Right ventricle myocardium inferior (tissue), 1 donor: ENCODE measurements at regions of chr3 and their contacts with region 1.

Region 1: DNA sequence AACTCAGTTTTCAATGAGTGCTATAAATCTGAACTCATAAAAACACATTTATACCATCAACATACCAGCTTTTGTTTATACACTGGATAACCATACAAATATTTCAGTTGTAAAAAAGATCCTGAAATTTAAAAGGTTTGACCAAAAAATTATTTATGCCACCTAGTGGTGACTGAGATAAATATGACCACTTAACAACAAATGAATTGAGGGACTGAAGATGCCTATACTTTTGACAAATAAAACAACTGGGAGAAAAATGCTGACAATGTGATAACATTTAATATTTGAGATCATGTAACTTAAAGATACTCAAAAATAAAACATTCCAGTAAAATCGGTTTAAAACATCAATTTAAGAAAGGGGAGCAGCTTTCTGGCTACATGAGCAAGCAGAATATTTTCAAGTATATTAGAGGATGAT is 30.4 kb downstream of the ATG3 start:
- DNase-seq: no peak
- ATAC-seq: no peak

Region 2: DNA sequence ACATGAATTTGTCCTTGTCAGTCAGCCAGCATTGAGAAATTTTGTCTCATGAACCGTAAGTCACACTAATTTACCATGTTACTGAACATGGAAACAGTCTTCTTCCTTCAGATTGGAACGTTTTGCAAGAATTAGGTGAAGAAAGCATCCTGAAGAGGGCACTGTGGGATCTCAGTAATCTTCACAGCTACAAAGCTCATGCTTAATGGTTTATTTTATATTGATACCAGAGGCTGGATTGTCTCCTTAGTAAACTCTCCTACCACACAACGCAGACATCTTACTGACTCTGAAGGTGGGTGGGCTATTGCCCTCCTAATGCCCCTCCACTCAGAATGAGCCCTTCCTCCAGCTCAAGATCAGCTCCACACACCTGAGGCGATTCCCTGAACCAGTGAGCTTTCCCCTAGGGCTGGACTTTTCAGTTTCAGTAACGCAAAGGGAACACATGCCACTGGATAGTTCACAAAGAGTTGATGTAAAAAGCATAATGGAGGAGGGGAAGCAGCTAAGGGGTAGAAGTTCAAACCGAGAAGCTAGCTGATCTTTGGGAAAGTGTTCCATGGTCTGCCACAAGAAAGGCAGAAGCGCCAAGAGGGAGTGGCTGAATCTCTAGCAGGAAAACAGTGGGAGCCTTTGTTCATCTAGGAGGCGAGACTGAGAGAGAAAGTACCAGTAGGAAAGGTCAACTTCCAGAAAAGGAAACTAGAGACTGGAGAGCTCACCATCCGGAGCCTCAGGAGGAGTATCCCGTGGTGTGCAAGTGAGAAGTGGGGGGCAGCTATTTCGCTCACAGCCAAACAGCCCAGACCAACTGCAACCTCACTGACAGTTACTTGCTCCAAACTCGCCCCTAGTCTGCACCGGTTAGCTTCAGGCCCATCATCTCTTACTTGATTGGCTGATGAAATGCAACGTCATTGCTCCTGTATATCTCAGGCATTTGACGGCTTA is 237.7 kb before region 1 on chr3 and contains the start of gene SLC9C1:
- intact Hi-C with region 1: loop called (anchors 5 kb)
- DNase-seq: no peak
- ATAC-seq: peak; percentile 91
- total RNA-seq, gene SLC9C1: 0.95 TPM